Activated CD4-positive, alpha-beta T cell treated with anti-CD3 and anti-CD28 coated beads for 36 hours (primary cell): ENCODE measurements at regions of chr1 and their contacts with region 1.

Region 1: GRCh38 chr1:212857992-212858460 is at the start of gene FLVCR1:
- DNase-seq: peak; percentile 98
- ATAC-seq: peak; percentile 98
- H3K4me3 Mint-ChIP-seq: no peak within 1 kb of the TSS
- H3K27ac Mint-ChIP-seq: peak within 1 kb of the TSS; percentile 92
- H3K4me1 Mint-ChIP-seq: peaks cover 15% of the 10 kb centered on the region
- H3K27me3 Mint-ChIP-seq: no peaks in the 10 kb centered on the region
- total RNA-seq, gene FLVCR1: 13.5 to 13.9 TPM

Region 2: DNA sequence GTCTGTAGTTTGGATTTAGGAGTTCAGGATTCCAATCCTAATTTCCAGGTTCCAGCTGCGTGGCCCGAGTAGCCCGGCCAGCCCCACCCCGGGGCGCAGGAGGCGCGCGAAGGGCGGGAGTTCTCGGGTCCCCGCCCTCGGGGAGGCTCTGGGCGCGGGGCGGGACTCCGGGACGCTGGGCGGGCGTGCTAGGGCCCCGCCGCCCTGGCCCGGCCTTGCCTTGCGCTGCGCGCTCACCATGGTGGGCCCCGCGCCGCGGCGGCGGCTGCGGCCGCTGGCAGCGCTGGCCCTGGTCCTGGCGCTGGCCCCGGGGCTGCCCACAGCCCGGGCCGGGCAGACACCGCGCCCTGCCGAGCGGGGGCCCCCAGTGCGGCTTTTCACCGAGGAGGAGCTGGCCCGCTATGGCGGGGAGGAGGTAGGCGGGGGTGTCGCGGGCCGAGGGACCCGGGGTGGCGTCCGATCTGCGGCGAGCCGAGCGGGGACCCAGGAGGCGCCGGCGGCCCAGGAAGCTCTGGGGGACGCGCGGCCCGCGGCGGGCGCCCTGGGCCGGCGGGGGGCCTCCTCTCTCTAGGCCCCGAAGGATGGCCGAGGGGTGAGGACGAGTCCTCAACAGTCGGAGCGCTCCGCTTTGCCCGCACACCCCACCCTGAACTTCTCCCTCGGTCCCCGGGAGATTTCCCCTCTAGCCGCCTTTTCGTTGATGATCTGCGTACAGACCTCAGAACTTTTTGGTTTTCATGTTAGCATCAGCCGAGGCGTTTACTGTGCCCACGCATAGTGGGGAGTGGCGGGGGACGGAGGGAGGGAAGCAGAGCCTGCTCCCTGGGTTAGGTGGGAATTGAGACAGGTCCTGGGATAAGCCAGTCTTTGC is 425.1 kb before region 1 on chr1 and contains the start of gene NENF:
- CTCF ChIA-PET with region 1: interaction called, 3 read pairs
- POLR2A ChIA-PET with region 1: no interaction called
- intact Hi-C with region 1: loop called in 1 of 2 experiments (anchors 2 kb)
- DNase-seq: peak; percentile 88
- ATAC-seq: peak; percentile 99
- H3K4me3 Mint-ChIP-seq: peak within 1 kb of the TSS; percentile 75
- H3K27ac Mint-ChIP-seq: peak within 1 kb of the TSS; percentile 56
- H3K4me1 Mint-ChIP-seq: peaks cover 39% of the 10 kb centered on the region
- H3K27me3 Mint-ChIP-seq: no peaks in the 10 kb centered on the region
- total RNA-seq, gene NENF: 30.8 to 34.1 TPM

Region 3: GRCh38 chr1:212608209-212608955 is 249.6 kb before region 1 on chr1 and contains the start of gene ATF3:
- CTCF ChIA-PET with region 1: no interaction called
- POLR2A ChIA-PET with region 1: interaction called, 6 read pairs
- intact Hi-C with region 1: loop called in 1 of 2 experiments (anchors 1 kb)
- DNase-seq: peak; percentile 97
- ATAC-seq: peak; percentile 89
- H3K4me3 Mint-ChIP-seq: peak within 1 kb of the TSS; percentile 91
- H3K27ac Mint-ChIP-seq: peak within 1 kb of the TSS; percentile 96
- H3K4me1 Mint-ChIP-seq: peaks cover 56% of the 10 kb centered on the region
- H3K27me3 Mint-ChIP-seq: peaks cover 45% of the 10 kb centered on the region
- total RNA-seq, gene ATF3: 40.3 to 44.9 TPM

Region 4: GRCh38 chr1:212791676-212792395 is 66.2 kb before region 1 on chr1 and contains the starts of genes NSL1 and TATDN3:
- CTCF ChIA-PET with region 1: no interaction called
- POLR2A ChIA-PET with region 1: no interaction called
- intact Hi-C with region 1: loop called (anchors 1 kb)
- DNase-seq: peak; percentile 95
- ATAC-seq: peak; percentile 89
- H3K4me3 Mint-ChIP-seq: peak within 1 kb of the TSS; percentile 99
- H3K27ac Mint-ChIP-seq: peak within 1 kb of the TSS; percentile 94
- H3K4me1 Mint-ChIP-seq: peaks cover 43% of the 10 kb centered on the region
- H3K27me3 Mint-ChIP-seq: no peaks in the 10 kb centered on the region
- total RNA-seq, gene NSL1: 39.2 to 40.9 TPM
- total RNA-seq, gene TATDN3: 13.8 to 15.2 TPM

Region 5: GRCh38 chr1:213015099-213016050 is 157.3 kb after region 1 on chr1 and contains the start of gene ANGEL2:
- CTCF ChIA-PET with region 1: no interaction called
- POLR2A ChIA-PET with region 1: no interaction called
- intact Hi-C with region 1: loop called in 1 of 2 experiments (anchors 1 kb)
- DNase-seq: peak; percentile 97
- ATAC-seq: peak; percentile 99
- H3K4me3 Mint-ChIP-seq: peak within 1 kb of the TSS; percentile 100
- H3K27ac Mint-ChIP-seq: peak within 1 kb of the TSS; percentile 100
- H3K4me1 Mint-ChIP-seq: peaks cover 30% of the 10 kb centered on the region
- H3K27me3 Mint-ChIP-seq: no peaks in the 10 kb centered on the region
- total RNA-seq, gene ANGEL2: 41.3 to 51.5 TPM

Region 6: GRCh38 chr1:213070406-213070805 is 212.4 kb after region 1 on chr1:
- CTCF ChIA-PET with region 1: no interaction called
- POLR2A ChIA-PET with region 1: no interaction called
- intact Hi-C with region 1: loop called in 1 of 2 experiments (anchors 1 kb)
- DNase-seq: peak; percentile 49
- ATAC-seq: peak; percentile 88
- H3K4me3 Mint-ChIP-seq: no peak overlapping the region
- H3K27ac Mint-ChIP-seq: no peak overlapping the region
- H3K4me1 Mint-ChIP-seq: peaks cover 15% of the 10 kb centered on the region
- H3K27me3 Mint-ChIP-seq: no peaks in the 10 kb centered on the region